ENCODE measurements at regions of chr7 and their contacts with region 1.

Region 1: DNA sequence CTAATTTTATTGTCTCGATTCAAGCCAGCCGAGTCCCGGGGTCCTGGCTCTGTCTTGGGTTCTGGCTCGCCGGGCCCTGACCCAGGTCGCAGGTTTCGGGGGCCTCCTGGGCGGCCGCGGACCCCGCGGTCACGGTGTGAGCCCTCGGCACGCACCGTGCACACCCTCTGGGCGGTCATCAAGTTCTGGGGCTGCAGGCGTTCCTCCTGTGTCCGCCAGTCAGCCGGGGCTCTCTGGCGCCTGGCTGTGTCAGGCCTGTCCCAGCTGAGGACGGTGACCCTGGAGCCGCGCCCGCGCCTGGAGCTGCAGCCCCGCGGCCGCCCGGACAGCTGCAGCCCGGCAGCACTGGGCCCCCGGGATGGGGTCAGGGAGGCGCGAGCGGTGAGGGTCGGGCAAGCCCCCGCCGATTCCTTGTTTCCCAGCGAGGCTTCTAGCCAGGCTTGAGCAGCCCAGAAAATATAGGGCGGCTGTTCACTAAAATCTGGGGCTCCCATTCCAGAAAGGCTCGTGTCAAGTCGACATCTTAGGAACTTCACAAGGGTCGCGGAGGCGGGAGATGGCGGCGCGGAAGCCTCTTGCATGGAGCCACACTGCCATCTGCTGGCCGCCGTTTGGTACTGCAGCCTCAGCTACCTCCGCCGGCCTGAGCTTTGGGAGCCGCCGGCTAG is 4.2 kb upstream of the HOXA7 start:
- DNase-seq: peak; percentile 87
- CTCF ChIP-seq: peak; percentile 97

Region 2: DNA sequence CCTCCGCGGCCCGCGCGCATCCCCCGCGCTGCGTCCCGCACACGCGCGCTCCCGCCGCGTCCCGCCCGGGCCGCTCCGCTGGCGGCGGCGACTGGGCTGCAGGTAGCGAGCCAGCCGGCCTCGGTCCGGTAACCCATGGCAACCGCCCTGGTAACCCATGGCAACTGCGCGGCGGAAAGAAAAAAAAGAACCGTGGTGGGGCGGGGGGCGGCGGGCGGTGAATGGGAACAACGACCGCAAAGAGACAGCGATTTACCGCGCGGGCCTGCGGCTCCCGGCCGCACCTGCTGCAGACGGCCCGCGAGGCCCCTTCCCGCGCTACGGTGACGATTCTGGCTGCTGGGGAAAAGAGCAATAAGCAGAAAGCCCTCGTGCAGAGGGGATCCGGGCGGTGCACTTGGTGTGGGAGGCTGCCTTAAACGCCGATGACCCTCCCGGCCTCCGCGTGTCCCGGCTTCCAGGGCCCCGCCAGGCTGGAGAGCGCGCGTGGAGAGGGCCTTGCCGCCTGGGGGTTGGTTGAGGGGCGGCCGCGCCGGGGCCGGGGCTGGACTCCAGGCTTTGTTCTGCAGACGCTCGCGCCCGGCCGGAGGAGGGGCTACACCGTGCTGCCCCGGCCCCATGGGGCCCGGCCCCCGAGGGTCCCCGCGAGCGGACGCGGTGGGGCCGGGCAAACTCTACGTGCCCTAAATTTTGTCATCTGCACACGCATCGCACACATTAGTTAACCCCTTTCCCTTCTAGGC is 784.3 kb before region 1 on chr7:
- CTCF ChIA-PET with region 1: interaction called, 39 read pairs
- POLR2A ChIA-PET with region 1: no interaction called
- DNase-seq: peak; percentile 36
- CTCF ChIP-seq: no peak

Region 3: DNA sequence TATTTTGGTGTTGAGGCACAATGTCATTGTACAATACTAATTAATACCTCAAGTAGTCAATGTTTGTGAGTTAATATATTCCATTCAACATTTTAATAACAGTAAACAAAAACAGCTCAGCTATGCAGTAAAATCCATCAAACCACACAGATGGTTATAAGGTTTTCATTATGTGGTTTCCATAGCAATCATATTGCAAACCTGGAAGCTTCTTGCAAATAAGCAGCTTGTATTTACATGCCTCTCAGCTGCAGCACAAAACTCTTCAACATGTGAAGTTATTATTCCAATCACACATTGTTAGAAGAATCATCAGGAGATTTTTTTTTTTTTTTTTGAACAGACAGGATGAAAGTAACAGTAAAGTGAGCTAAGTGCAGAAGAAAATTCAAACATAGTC is 466.5 kb before region 1 on chr7:
- CTCF ChIA-PET with region 1: interaction called, 29 read pairs
- POLR2A ChIA-PET with region 1: no interaction called
- DNase-seq: no peak
- CTCF ChIP-seq: no peak

Region 4: GRCh38 chr7:26853788-26854393 is 306.8 kb before region 1 on chr7:
- CTCF ChIA-PET with region 1: interaction called, 23 read pairs
- POLR2A ChIA-PET with region 1: no interaction called
- DNase-seq: no peak
- CTCF ChIP-seq: peak; percentile 30

Region 5: GRCh38 chr7:27064159-27064558 is 96.5 kb before region 1 on chr7:
- CTCF ChIA-PET with region 1: no interaction called
- POLR2A ChIA-PET with region 1: no interaction called
- DNase-seq: no peak
- CTCF ChIP-seq: no peak

Region 6: GRCh38 chr7:27172823-27173510 is 12.3 kb after region 1 on chr7:
- CTCF ChIA-PET with region 1: interaction called, 19 read pairs
- POLR2A ChIA-PET with region 1: no interaction called
- DNase-seq: no peak
- CTCF ChIP-seq: no peak

Region 7: DNA sequence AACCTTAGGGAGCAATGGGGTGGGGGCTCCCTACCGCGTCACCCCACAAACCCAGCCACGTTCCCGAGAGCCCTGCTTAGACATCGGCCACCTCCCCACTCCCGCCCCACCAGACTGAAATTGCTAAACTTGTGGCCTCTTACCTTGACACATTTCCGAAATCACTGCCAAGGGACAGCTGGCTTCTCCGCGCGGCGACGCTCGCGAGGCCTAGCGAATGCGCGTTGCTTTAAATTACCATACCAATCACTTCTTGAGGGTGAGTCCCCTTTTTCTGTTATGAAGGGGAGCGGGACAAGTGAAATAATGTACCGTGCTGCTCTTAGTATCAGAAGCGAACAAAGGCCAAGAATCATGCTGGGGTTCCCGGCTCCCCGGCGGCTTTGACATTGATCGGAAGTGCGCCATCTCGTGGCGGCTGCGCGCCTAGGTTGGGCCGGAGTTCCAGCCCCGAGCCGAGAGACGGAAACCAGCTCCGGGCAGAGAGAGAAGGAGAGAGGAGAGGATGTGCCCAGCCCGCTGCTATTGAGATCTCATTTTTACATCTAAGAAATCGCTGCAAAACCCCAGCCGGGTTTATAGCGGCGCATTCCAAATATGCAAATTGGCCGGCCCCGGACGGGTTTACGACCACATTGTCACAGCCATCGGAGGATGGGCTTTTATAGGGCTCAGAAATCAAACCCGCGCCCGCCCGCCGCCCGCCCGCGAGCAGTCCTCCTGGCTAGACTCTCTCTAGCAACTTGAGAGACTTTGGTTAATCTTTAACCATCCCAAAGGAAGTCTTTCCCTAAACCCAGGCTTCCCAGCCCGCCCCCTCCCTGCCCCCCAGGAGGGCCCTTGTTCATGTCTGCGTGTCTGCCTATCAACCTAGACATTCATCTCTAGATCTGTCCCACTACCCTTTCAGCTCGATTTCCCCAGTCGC is 19.1 kb after region 1 on chr7:
- CTCF ChIA-PET with region 1: interaction called, 18 read pairs
- POLR2A ChIA-PET with region 1: no interaction called
- DNase-seq: peak; percentile 76
- CTCF ChIP-seq: peak; percentile 66

Region 8: DNA sequence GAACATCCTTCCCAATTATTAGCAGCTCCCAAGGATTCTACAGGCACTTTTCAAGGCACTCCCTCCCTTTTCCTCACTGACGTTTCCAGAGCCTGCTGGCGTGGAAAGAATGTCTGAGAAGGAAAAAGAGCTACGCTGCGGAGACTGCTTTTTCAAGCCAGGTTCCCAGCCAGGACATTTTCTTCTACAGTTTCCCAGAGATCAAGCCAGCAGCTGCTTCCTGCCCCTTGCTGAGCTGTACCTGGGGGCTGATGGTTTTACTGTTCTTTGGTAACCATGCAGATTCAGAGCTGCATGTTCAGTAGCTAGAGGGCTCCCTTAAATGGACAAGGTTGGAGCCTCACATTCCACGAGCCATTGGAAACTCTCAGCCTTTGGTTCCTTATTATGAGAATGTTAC is 215.3 kb after region 1 on chr7:
- CTCF ChIA-PET with region 1: no interaction called
- POLR2A ChIA-PET with region 1: no interaction called
- DNase-seq: no peak
- CTCF ChIP-seq: no peak